OCI-LY7 (cell line): ENCODE measurements at regions of chr7 and their contacts with region 1.

Region 1: GRCh38 chr7:102077081-102077480 is 209.6 kb upstream of the SH2B2 start:
- DNase-seq: peak; percentile 44
- H3K4me3 ChIP-seq: no peak overlapping the region
- H3K27ac ChIP-seq: no peak overlapping the region
- H3K4me1 ChIP-seq: peaks cover 8% of the 10 kb centered on the region
- CTCF ChIP-seq: no peak

Region 2: DNA sequence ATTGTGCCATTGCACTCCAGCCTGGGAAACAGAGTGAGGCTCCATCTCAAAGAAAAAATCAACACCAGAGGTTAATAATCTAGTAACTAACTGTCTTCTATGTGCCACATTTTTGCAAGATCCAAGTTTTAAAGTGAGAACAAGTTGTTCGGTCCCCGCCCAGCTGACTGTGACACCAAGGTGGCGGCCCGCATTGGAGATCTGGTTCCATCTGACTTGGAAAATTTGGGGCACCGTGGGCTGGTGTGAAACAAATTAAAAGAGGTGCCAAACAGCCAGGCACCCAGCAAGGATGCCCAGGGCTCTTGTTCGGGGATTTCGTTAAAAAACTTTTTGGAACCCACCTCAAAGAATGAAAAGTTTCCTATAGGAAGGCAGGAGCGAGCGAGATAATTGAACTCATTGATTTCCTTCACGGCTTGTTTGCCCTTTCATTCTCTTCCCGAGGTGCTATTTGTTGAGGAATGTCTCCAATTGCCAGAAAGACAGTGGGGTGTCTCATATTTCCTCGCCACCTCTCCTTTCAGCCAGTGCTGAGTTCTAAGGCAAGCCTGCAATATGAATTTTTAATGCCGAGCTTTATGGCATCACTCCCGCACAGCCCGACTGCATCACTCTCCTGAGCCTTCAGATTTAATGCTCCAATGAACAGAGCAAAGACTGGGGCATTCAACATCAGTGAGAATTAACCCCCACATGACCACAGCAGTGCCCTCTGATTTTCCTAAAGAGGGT is 52.7 kb after region 1 on chr7:
- CTCF ChIA-PET with region 1: no interaction called
- POLR2A ChIA-PET with region 1: interaction called, 10 read pairs
- intact Hi-C with region 1: no loop called
- DNase-seq: no peak
- H3K4me3 ChIP-seq: no peak overlapping the region
- H3K27ac ChIP-seq: no peak overlapping the region
- H3K4me1 ChIP-seq: no peaks in the 10 kb centered on the region
- CTCF ChIP-seq: no peak

Region 3: DNA sequence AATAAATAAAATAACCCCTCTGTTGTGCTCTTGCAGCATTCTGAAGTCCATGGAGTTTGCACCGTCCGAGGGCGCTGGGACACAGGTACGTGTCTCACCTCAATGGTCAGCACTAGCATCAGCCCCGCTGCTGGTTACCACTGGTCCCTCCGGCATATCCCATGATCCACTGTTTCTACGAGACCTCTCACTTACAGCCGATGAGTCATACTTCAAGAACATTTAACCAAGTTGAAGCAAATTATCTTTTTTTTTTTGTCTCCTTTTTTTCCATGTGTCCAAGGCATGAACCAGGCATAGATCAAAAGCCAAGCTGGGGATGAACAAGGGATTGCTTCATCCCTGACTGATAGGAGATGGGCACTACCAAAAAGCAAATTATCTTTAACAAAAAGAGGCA is 116.7 kb after region 1 on chr7:
- CTCF ChIA-PET with region 1: no interaction called
- POLR2A ChIA-PET with region 1: no interaction called
- intact Hi-C with region 1: no loop called
- DNase-seq: no peak
- H3K4me3 ChIP-seq: no peak overlapping the region
- H3K27ac ChIP-seq: no peak overlapping the region
- H3K4me1 ChIP-seq: no peaks in the 10 kb centered on the region
- CTCF ChIP-seq: no peak